PC-9 (cell line): ENCODE measurements at regions of chr2 and their contacts with region 1.

Region 1: DNA sequence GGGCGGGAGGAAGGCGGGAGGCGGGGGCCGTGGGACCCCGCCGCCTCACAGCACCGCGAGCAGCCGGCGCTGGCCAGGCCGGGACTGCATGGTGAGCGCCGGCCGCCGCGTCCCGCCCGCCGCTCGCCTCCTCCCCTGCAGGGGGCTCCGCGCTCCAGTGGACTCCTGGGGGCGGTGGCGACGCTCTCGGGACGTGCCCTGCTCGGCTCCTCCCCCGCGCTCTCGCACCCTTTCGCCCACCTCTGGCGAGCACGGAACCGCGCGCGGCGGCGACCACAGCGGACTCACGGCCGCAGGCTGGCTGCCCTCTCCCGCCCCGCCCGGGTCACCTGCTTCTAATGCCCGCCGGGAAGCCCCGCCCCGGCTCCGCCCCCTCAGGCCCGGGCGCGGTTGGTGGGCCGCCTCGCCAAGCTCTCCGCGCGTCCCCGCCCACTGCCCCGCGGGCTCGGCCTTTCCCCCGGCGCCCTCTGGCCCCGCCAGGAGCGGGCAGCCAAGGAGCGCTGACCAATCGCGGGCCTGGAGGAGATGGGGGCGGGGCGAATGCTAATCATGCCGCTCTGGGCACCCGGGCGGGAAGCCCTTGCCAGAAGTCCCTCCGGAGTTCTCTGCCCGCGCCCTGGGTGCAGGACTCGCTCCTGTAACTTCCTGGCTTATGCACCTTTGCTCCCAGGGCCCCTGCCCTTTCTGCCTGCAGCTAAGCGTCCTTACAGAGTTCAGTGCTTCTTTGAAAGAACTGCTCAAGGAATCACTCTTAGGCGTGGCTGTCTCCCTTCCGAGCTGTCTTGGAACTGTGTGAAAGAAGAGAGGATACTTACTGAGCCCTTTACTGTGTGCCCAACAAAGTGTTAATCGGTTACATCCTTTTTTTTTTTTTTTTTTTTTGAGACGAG is at the start of gene FZD5:
- DNase-seq: peak; percentile 86 to 98
- H3K4me3 ChIP-seq: peak within 1 kb of the TSS; percentile 71
- H3K27ac ChIP-seq: 0 out of 2 replicates have a peak within 1 kb of the TSS, but pooled peaks have one; percentile 20
- H3K4me1 ChIP-seq: peaks cover 21% of the 10 kb centered on the region
- H3K27me3 ChIP-seq: no peaks in the 10 kb centered on the region
- CTCF ChIP-seq: no peak
- total RNA-seq, gene FZD5: 5.6 and 6.8 TPM in 2 replicates

Region 2: DNA sequence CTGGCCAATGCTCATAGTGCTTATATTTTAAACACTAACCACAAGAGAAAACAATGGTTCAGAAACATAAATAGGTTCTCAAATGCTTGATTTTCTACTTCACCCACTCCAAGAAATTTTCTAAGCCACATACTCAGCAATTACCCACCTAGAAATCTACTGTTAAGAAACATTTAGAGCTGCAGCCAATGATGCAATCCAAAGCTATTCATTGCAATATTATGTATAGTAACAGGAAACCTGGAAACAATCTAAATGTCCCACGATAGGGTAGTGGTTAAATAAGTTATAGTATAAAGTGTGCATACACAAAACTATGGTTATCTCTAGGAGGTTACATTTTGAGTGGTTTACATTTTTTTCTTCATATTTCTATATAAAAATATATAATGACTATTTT is 1121.9 kb before region 1 on chr2:
- CTCF ChIA-PET with region 1: no interaction called
- POLR2A ChIA-PET with region 1: no interaction called
- intact Hi-C with region 1: no loop called
- DNase-seq: no peak
- H3K4me3 ChIP-seq: no peak overlapping the region
- H3K27ac ChIP-seq: 0 out of 2 replicates have a peak overlapping the region, but pooled peaks have one; percentile 19
- H3K4me1 ChIP-seq: no peaks in the 10 kb centered on the region
- H3K27me3 ChIP-seq: no peaks in the 10 kb centered on the region
- CTCF ChIP-seq: no peak

Region 3: GRCh38 chr2:207352978-207353671 is 416.7 kb before region 1 on chr2:
- CTCF ChIA-PET with region 1: no interaction called
- POLR2A ChIA-PET with region 1: no interaction called
- intact Hi-C with region 1: no loop called
- DNase-seq: no peak
- H3K4me3 ChIP-seq: no peak overlapping the region
- H3K27ac ChIP-seq: no peak overlapping the region
- H3K4me1 ChIP-seq: no peaks in the 10 kb centered on the region
- H3K27me3 ChIP-seq: no peaks in the 10 kb centered on the region
- CTCF ChIP-seq: no peak

Region 4: GRCh38 chr2:207734264-207734635 is 35.6 kb before region 1 on chr2:
- CTCF ChIA-PET with region 1: no interaction called
- POLR2A ChIA-PET with region 1: no interaction called
- intact Hi-C with region 1: no loop called
- DNase-seq: peak in 1 of 2 experiments; percentile 38
- H3K4me3 ChIP-seq: no peak overlapping the region
- H3K27ac ChIP-seq: no peak overlapping the region
- H3K4me1 ChIP-seq: no peaks in the 10 kb centered on the region
- H3K27me3 ChIP-seq: no peaks in the 10 kb centered on the region
- CTCF ChIP-seq: peak; percentile 63

Region 5: DNA sequence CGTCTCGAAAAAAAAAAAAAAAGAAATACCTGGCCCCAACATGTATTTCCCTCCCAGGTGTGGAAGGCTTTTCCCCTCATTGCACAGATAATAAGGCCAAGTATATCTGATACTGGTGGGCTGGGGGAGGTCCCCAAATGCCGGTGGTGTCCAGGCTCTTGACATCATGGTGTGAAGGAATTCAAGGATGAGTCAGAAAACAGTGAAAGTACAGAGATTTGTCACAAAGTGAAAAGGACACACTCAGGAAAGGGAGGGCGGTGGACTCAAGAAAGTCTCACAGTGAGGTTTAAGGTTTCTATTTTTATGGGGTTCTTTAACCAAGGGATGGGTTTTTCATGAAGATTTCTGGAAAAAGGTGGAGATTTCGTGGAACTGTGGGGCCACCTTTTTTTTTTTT is 37.7 kb after region 1 on chr2:
- CTCF ChIA-PET with region 1: no interaction called
- POLR2A ChIA-PET with region 1: no interaction called
- intact Hi-C with region 1: loop called (anchors 1 kb)
- DNase-seq: no peak
- H3K4me3 ChIP-seq: no peak overlapping the region
- H3K27ac ChIP-seq: no peak overlapping the region
- H3K4me1 ChIP-seq: peaks cover 32% of the 10 kb centered on the region
- H3K27me3 ChIP-seq: no peaks in the 10 kb centered on the region
- CTCF ChIP-seq: no peak

Region 6: GRCh38 chr2:207847807-207848544 is 78.1 kb after region 1 on chr2:
- CTCF ChIA-PET with region 1: no interaction called
- POLR2A ChIA-PET with region 1: no interaction called
- intact Hi-C with region 1: loop called (anchors 2 kb)
- DNase-seq: peak; percentile 70 to 96
- H3K4me3 ChIP-seq: no peak overlapping the region
- H3K27ac ChIP-seq: peak overlapping the region; percentile 46
- H3K4me1 ChIP-seq: peaks cover 26% of the 10 kb centered on the region
- H3K27me3 ChIP-seq: no peaks in the 10 kb centered on the region
- CTCF ChIP-seq: no peak

Region 7: GRCh38 chr2:208040199-208041171 is 270.6 kb after region 1 on chr2:
- CTCF ChIA-PET with region 1: no interaction called
- POLR2A ChIA-PET with region 1: no interaction called
- intact Hi-C with region 1: loop called (anchors 1 kb)
- DNase-seq: peak; percentile 33 to 45
- H3K4me3 ChIP-seq: no peak overlapping the region
- H3K27ac ChIP-seq: no peak overlapping the region
- H3K4me1 ChIP-seq: peaks cover 16% of the 10 kb centered on the region
- H3K27me3 ChIP-seq: no peaks in the 10 kb centered on the region
- CTCF ChIP-seq: peak; percentile 57

Region 8: DNA sequence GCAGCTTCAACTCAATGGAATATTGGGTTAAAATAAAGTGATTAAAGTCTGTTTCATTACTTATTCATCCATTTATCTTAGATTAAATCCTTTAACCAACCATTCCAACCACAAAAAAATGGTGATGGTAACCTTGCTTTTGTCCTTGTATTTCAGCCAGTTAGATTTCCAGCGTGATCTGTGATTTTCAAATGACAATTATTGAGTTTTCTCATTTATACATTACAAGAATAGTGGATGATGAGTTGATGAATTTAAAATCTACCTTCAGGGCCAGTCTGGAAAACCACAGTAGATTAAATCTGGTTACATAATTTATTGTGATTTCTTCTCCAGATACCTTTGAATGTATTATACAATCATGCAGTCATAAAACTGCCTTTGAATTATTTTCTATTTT is 1972.1 kb after region 1 on chr2:
- CTCF ChIA-PET with region 1: interaction called, 14 read pairs
- POLR2A ChIA-PET with region 1: no interaction called
- intact Hi-C with region 1: no loop called
- DNase-seq: no peak
- H3K4me3 ChIP-seq: no peak overlapping the region
- H3K27ac ChIP-seq: no peak overlapping the region
- H3K4me1 ChIP-seq: no peaks in the 10 kb centered on the region
- H3K27me3 ChIP-seq: no peaks in the 10 kb centered on the region
- CTCF ChIP-seq: no peak